ENCODE measurements at regions of chr3 and their contacts with region 1.

Region 1: GRCh38 chr3:191244242-191244867 is 45.3 kb downstream of the OSTN start:
- DNase-seq: no peak
- ATAC-seq: no peak
- H3K4me3 ChIP-seq: no peak overlapping the region
- H3K27ac ChIP-seq: no peak overlapping the region
- H3K4me1 ChIP-seq: no peaks in the 10 kb centered on the region; the same call in 1 of the 2 replicates
- H3K27me3 ChIP-seq: no peaks in the 10 kb centered on the region
- CTCF ChIP-seq: peak in 1 of 3 experiments; percentile 27; a peak in 2 of 6 replicates
- EP300 ChIP-seq: no peak
- POLR2A ChIP-seq: no peak
- RAD21 ChIP-seq: peak; percentile 64

Region 2: DNA sequence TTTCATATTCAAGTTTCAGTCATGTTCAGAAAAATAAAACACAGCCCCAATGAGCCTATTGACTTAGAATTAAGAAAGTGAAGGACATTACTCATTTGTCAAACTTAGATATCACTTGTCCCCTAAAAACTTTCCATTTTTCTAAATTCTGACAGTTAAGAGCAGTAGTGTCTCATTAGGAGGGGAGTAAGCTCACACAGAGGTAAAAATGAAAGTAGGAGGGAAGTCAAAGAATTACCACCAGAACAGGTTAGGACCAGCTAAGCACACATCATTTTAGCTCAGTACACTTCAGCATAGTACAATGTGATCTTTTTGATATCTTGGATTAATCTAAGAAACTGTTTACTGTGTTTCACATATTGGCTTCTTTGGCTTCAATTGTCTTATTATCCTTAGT is 19.0 kb after region 1 on chr3:
- CTCF ChIA-PET with region 1: interaction called, 6 read pairs
- POLR2A ChIA-PET with region 1: interaction called, 7 read pairs
- RAD21 ChIA-PET with region 1: interaction called, 36 read pairs
- SMC1A ChIA-PET with region 1: interaction called, 40 read pairs
- in situ Hi-C with region 1: no loop called
- intact Hi-C with region 1: no loop called
- DNase-seq: no peak
- ATAC-seq: peak; percentile 98
- H3K4me3 ChIP-seq: peak overlapping the region; percentile 10; the same call in 1 of the 2 replicates
- H3K27ac ChIP-seq: peak overlapping the region; percentile 40
- H3K4me1 ChIP-seq: peaks cover 8% of the 10 kb centered on the region; the same call in 1 of the 2 replicates
- H3K27me3 ChIP-seq: no peaks in the 10 kb centered on the region
- CTCF ChIP-seq: no peak
- EP300 ChIP-seq: no peak
- POLR2A ChIP-seq: no peak
- RAD21 ChIP-seq: no peak

Region 3: GRCh38 chr3:191290311-191291025 is 46.1 kb after region 1 on chr3:
- CTCF ChIA-PET with region 1: interaction called, 8 read pairs
- POLR2A ChIA-PET with region 1: interaction called, 4 read pairs
- RAD21 ChIA-PET with region 1: interaction called, 15 read pairs
- SMC1A ChIA-PET with region 1: interaction called, 9 read pairs
- in situ Hi-C with region 1: no loop called
- intact Hi-C with region 1: no loop called
- DNase-seq: no peak
- ATAC-seq: peak; percentile 93
- H3K4me3 ChIP-seq: no peak overlapping the region
- H3K27ac ChIP-seq: peak overlapping the region; percentile 68
- H3K4me1 ChIP-seq: peaks cover 13% of the 10 kb centered on the region
- H3K27me3 ChIP-seq: no peaks in the 10 kb centered on the region
- CTCF ChIP-seq: no peak
- EP300 ChIP-seq: no peak
- POLR2A ChIP-seq: no peak
- RAD21 ChIP-seq: no peak

Region 4: DNA sequence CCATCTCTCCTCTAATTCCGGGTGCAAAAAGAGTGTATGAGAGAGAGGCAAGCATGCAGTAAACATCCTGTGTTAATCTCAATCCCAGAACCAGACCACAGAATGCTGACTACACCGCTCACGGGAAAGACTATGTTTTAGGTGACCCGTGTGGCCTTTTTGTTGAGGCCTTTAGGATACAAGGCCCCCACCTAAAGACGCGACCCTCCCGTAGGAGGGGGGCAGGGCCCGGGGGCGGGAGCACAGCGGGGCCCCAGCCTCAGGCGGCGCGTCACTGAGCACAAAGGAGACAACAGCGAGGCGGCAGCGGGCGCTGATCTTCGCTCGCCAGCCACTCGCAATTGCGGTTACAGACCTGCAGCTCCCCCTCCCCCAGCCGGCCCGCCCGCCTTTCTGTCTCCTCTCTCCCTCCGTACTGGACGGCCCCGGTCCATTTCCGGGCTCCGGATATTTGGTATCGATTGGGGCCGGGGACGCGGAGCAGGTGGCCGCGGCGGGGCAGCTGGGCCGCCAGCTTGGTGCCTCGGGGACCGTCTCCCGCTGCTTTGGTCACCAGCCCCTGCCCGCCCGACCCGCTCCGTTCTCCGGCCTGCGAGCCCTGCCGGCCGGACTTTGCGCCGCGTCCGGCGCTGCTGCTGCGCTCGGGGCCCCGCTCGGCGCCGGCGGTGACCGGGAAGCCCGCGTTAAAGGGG is 84.8 kb after region 1 on chr3 and contains the start of gene CCDC50:
- CTCF ChIA-PET with region 1: interaction called, 16 read pairs
- POLR2A ChIA-PET with region 1: interaction called, 5 read pairs
- RAD21 ChIA-PET with region 1: interaction called, 38 read pairs
- SMC1A ChIA-PET with region 1: interaction called, 47 read pairs
- in situ Hi-C with region 1: no loop called
- intact Hi-C with region 1: loop called (anchors 1 kb)
- DNase-seq: no peak
- ATAC-seq: peak; percentile 74
- H3K4me3 ChIP-seq: peak within 1 kb of the TSS; percentile 73
- H3K27ac ChIP-seq: peak within 1 kb of the TSS; percentile 78
- H3K4me1 ChIP-seq: peaks cover 15% of the 10 kb centered on the region
- H3K27me3 ChIP-seq: no peaks in the 10 kb centered on the region
- CTCF ChIP-seq: no peak
- EP300 ChIP-seq: peak; percentile 46 to 50; a peak in 3 of 4 replicates
- POLR2A ChIP-seq: peak; percentile 86
- RAD21 ChIP-seq: no peak
- polyA plus RNA-seq, gene CCDC50: 46.7 to 61.5 TPM

Region 5: GRCh38 chr3:191350396-191351090 is 106.2 kb after region 1 on chr3:
- CTCF ChIA-PET with region 1: interaction called, 16 read pairs
- POLR2A ChIA-PET with region 1: no interaction called
- RAD21 ChIA-PET with region 1: interaction called, 72 read pairs
- SMC1A ChIA-PET with region 1: interaction called, 21 read pairs
- in situ Hi-C with region 1: no loop called
- intact Hi-C with region 1: no loop called
- DNase-seq: no peak
- ATAC-seq: no peak
- H3K4me3 ChIP-seq: no peak overlapping the region
- H3K27ac ChIP-seq: no peak overlapping the region
- H3K4me1 ChIP-seq: peaks cover 9% of the 10 kb centered on the region; the same call in 1 of the 2 replicates
- H3K27me3 ChIP-seq: no peaks in the 10 kb centered on the region
- CTCF ChIP-seq: no peak
- EP300 ChIP-seq: no peak
- POLR2A ChIP-seq: no peak
- RAD21 ChIP-seq: no peak

Region 6: GRCh38 chr3:191376516-191377141 is 132.3 kb after region 1 on chr3:
- CTCF ChIA-PET with region 1: interaction called, 13 read pairs
- POLR2A ChIA-PET with region 1: interaction called, 3 read pairs
- RAD21 ChIA-PET with region 1: interaction called, 19 read pairs
- SMC1A ChIA-PET with region 1: interaction called, 20 read pairs
- in situ Hi-C with region 1: no loop called
- intact Hi-C with region 1: loop called (anchors 5 kb)
- DNase-seq: no peak
- ATAC-seq: no peak
- H3K4me3 ChIP-seq: no peak overlapping the region
- H3K27ac ChIP-seq: no peak overlapping the region
- H3K4me1 ChIP-seq: peaks cover 14% of the 10 kb centered on the region
- H3K27me3 ChIP-seq: no peaks in the 10 kb centered on the region
- CTCF ChIP-seq: no peak
- EP300 ChIP-seq: no peak
- POLR2A ChIP-seq: no peak
- RAD21 ChIP-seq: no peak

Region 7: DNA sequence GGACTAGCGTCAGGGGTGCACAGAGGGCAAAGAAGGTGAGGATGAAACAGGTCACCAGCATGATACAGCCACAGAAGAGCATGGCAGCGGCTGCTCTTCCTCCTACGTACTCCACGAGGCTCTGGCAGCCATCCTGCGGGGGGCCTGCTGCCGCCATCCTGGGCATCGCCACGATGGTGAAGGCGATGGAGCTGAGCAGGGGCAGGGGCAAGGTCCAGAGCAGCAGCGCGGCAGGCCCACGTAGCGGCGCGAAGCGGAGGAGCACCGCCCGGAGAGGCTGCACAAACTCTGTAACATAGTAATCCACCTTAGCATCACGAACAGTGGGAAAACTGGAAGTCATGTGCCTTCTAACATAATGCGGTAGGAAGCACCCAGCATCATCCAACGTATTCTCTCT is 708.3 kb after region 1 on chr3:
- CTCF ChIA-PET with region 1: no interaction called
- POLR2A ChIA-PET with region 1: no interaction called
- RAD21 ChIA-PET with region 1: no interaction called
- SMC1A ChIA-PET with region 1: no interaction called
- in situ Hi-C with region 1: no loop called
- intact Hi-C with region 1: no loop called
- DNase-seq: no peak
- ATAC-seq: no peak
- H3K4me3 ChIP-seq: no peak overlapping the region
- H3K27ac ChIP-seq: no peak overlapping the region
- H3K4me1 ChIP-seq: no peaks in the 10 kb centered on the region
- H3K27me3 ChIP-seq: no peaks in the 10 kb centered on the region
- CTCF ChIP-seq: no peak
- EP300 ChIP-seq: no peak
- POLR2A ChIP-seq: no peak
- RAD21 ChIP-seq: no peak